ENCODE measurements at regions of chr5 and their contacts with region 1.

Region 1: GRCh38 chr5:69049151-69049550 is 44.7 kb upstream of the SLC30A5 start:
- DNase-seq: no peak

Region 2: GRCh38 chr5:68973696-68974095 is 75.5 kb before region 1 on chr5:
- intact Hi-C with region 1: loop called in 1 of 2 experiments (anchors 2 kb)
- DNase-seq: no peak

Region 3: GRCh38 chr5:69033690-69034089 is 15.5 kb before region 1 on chr5:
- intact Hi-C with region 1: loop called in 1 of 2 experiments (anchors 1 kb)
- DNase-seq: no peak

Measured in posterior vena cava (tissue), 2 donors.